ENCODE measurements at regions of chr22 and their contacts with region 1.

Region 1: GRCh38 chr22:35399678-35400334 is at the start of gene MCM5:
- DNase-seq: peak; percentile 94 to 99 (median 97)
- ATAC-seq: peak; percentile 98
- H3K4me3 ChIP-seq: peak within 1 kb of the TSS; percentile 75 to 98
- H3K4me3 Mint-ChIP-seq: peak within 1 kb of the TSS; percentile 98
- H3K27ac ChIP-seq: peak within 1 kb of the TSS; percentile 73 to 75
- H3K27ac Mint-ChIP-seq: peak within 1 kb of the TSS; percentile 97
- H3K4me1 ChIP-seq: peaks cover 13% of the 10 kb centered on the region
- H3K4me1 Mint-ChIP-seq: peaks cover 17% of the 10 kb centered on the region
- H3K27me3 ChIP-seq: no peaks in the 10 kb centered on the region
- H3K27me3 Mint-ChIP-seq: no peaks in the 10 kb centered on the region
- CTCF ChIP-seq: no peak
- total RNA-seq, gene MCM5: 29.3 to 32.0 TPM

Region 2: DNA sequence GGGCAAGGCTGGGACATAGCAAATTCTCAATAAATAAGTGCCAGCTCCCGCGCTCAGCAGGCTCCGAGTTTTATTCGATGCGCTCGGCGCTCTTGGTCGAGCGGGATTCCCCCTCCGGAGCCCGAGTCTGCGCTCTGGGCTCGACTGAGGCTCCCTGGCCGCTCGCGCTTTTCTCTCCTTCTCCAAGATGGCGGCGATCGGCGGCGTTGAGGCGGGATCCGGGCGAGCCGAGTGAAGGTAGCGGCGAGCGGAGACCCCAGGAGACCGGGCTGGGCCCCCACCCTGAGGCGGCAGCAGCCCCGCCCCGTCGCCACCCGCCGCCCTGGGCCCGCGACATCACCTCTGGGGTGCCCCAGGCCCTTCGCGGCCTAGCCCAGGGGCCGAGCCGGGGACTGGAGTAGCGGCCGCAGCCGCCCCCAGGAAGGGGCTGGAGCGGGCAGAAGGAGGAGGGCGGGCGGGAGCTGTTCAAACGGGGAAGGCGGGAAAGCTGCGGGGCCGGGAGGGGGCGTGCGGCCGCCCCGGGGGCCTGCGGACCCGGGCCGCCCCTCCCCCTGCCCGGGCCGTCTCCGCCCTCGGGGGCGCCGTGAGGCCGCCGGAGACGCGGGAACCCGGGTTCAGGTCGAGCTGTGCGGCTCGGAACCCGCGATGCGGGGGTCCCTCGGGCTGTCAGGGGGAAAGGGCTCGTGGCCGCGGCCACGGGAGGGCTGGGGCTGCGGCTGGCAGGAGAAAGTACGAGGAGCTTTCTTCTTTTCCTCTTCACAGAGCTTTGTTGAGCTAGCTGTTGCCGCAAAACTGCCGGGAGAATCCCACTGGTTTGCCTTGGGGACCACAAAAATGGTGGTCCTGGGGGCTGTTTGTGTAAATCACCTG is 142.2 kb before region 1 on chr22 and contains the start of gene HMGXB4:
- CTCF ChIA-PET with region 1: no interaction called
- POLR2A ChIA-PET with region 1: no interaction called
- intact Hi-C with region 1: loop called in 1 of 2 experiments (anchors 1 kb)
- DNase-seq: peak; percentile 74 to 95 (median 87)
- ATAC-seq: peak; percentile 91
- H3K4me3 ChIP-seq: peak within 1 kb of the TSS; percentile 72 to 90
- H3K4me3 Mint-ChIP-seq: peak within 1 kb of the TSS; percentile 93
- H3K27ac ChIP-seq: peak within 1 kb of the TSS; percentile 74 to 75
- H3K27ac Mint-ChIP-seq: peak within 1 kb of the TSS; percentile 96
- H3K4me1 ChIP-seq: peaks cover 16% of the 10 kb centered on the region
- H3K4me1 Mint-ChIP-seq: peaks cover 28% of the 10 kb centered on the region
- H3K27me3 ChIP-seq: no peaks in the 10 kb centered on the region
- H3K27me3 Mint-ChIP-seq: no peaks in the 10 kb centered on the region
- CTCF ChIP-seq: no peak
- total RNA-seq, gene HMGXB4: 42.6 to 47.0 TPM

Region 3: DNA sequence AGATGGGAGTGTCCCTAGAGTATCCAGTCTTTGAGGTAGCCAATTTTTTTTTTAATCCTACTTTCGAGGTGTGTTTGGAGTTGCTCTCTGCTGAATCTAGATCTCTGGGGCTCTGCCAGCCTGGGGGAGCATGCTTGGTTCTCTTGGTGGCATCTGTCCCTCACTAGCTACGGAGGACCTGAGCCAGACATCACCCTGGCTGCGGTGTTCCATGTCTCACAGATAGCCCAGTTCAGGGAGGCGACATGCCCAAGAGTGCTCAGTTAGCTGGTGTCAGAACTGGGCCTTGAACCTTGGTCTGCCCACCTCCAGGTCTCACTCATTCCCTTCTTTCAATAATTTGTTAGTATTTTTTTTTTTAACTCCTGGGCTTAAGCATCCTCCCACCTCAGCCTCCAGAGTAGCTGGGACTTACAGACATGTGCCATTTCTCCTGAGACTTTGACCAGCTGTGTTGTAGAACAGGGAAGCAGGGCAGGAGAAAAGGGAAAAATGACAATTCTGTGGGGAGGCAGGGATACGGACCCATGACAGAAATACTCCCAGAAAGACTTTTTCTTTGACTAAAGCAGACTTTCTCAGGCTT is 18.3 kb before region 1 on chr22:
- CTCF ChIA-PET with region 1: no interaction called
- POLR2A ChIA-PET with region 1: no interaction called
- intact Hi-C with region 1: no loop called
- DNase-seq: no peak
- ATAC-seq: no peak
- H3K4me3 ChIP-seq: peak overlapping the region; percentile 2 to 28
- H3K4me3 Mint-ChIP-seq: peak overlapping the region; percentile 26
- H3K27ac ChIP-seq: no peak overlapping the region
- H3K27ac Mint-ChIP-seq: no peak overlapping the region
- H3K4me1 ChIP-seq: peaks cover 20% of the 10 kb centered on the region
- H3K4me1 Mint-ChIP-seq: peaks cover 22% of the 10 kb centered on the region
- H3K27me3 ChIP-seq: no peaks in the 10 kb centered on the region
- H3K27me3 Mint-ChIP-seq: peaks cover 31% of the 10 kb centered on the region
- CTCF ChIP-seq: no peak

Region 4: DNA sequence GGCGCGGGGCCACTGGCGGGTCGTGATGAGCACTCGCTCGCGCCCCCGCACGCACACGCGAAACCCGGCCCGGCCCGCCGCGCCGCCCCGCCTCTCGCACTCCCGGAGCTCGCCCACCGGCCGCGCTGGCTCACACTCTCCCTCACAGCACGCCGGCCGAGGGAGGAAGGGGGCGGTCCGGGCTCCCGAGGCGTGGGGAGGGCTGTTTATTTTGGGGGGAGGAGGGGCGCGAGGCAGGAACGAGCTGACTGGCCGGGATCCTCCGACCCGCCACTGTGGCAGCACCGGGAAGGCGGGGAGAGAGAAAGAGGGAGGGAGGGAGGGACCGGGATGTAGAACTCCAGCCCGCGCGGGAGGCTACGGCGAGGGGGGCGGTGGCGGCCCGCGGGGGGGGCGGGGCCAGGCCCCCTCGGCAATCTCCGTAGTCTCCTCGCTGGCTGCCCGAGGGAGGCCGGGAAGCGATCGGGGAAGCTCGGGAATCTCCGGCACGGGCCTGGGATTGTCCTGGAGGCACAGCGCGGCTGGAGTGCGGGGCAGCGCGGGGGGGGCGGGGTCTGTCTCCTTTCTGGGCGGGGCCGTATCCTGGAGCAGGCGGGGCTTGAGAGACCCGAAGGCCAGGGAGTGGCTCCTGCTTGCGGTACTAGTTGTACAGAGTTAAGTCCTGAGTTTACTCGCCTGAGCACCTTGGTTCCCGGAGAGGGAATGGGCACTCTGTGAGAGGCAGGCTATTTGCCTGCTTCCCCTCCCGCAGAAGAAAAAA is 629.0 kb after region 1 on chr22 and contains the start of gene RBFOX2:
- CTCF ChIA-PET with region 1: no interaction called
- POLR2A ChIA-PET with region 1: no interaction called
- intact Hi-C with region 1: loop called in 1 of 2 experiments (anchors 10 kb)
- DNase-seq: peak; percentile 13 to 76 (median 57)
- ATAC-seq: peak; percentile 73
- H3K4me3 ChIP-seq: peak within 1 kb of the TSS; percentile 50 to 56
- H3K4me3 Mint-ChIP-seq: peak within 1 kb of the TSS; percentile 91
- H3K27ac ChIP-seq: no peak within 1 kb of the TSS
- H3K27ac Mint-ChIP-seq: peak within 1 kb of the TSS; percentile 75
- H3K4me1 ChIP-seq: peaks cover 13% of the 10 kb centered on the region
- H3K4me1 Mint-ChIP-seq: peaks cover 22% of the 10 kb centered on the region
- H3K27me3 ChIP-seq: peaks cover 0 to 7% of the 10 kb centered on the region in 2 experiments
- H3K27me3 Mint-ChIP-seq: peaks cover 8% of the 10 kb centered on the region
- CTCF ChIP-seq: no peak
- total RNA-seq, gene RBFOX2: 0.79 to 0.94 TPM

Region 5: GRCh38 chr22:36528795-36529751 is 1129.3 kb after region 1 on chr22 and contains the start of gene EIF3D:
- CTCF ChIA-PET with region 1: no interaction called
- POLR2A ChIA-PET with region 1: no interaction called
- intact Hi-C with region 1: loop called (anchors 2 to 5 kb)
- DNase-seq: peak; percentile 95 to 100 (median 98)
- ATAC-seq: peak; percentile 92
- H3K4me3 ChIP-seq: peak within 1 kb of the TSS; percentile 67 to 90
- H3K4me3 Mint-ChIP-seq: peak within 1 kb of the TSS; percentile 90
- H3K27ac ChIP-seq: peak within 1 kb of the TSS; percentile 91 to 93
- H3K27ac Mint-ChIP-seq: peak within 1 kb of the TSS; percentile 99
- H3K4me1 ChIP-seq: peaks cover 12% of the 10 kb centered on the region
- H3K4me1 Mint-ChIP-seq: peaks cover 24% of the 10 kb centered on the region
- H3K27me3 ChIP-seq: no peaks in the 10 kb centered on the region
- H3K27me3 Mint-ChIP-seq: no peaks in the 10 kb centered on the region
- CTCF ChIP-seq: no peak
- total RNA-seq, gene EIF3D: 302 to 315 TPM